Posterior cingulate gyrus (tissue), 11 donors: ENCODE measurements at regions of chr17 and their contacts with region 1.

Region 1: GRCh38 chr17:3738562-3739295 is 15.0 kb downstream of the HASPIN start:
- DNase-seq: peak in 9 of 10 donors; percentile 39 to 94 (median 54)

Region 2: GRCh38 chr17:3695723-3696411 is 42.9 kb before region 1 on chr17 and contains the start of gene P2RX5:
- intact Hi-C with region 1: no loop called
- DNase-seq: peak in 4 of 10 donors; percentile 19 to 83 (median 54)

Region 3: GRCh38 chr17:3802461-3803307 is 64.0 kb after region 1 on chr17:
- intact Hi-C with region 1: no loop called
- DNase-seq: no peak

Region 4: DNA sequence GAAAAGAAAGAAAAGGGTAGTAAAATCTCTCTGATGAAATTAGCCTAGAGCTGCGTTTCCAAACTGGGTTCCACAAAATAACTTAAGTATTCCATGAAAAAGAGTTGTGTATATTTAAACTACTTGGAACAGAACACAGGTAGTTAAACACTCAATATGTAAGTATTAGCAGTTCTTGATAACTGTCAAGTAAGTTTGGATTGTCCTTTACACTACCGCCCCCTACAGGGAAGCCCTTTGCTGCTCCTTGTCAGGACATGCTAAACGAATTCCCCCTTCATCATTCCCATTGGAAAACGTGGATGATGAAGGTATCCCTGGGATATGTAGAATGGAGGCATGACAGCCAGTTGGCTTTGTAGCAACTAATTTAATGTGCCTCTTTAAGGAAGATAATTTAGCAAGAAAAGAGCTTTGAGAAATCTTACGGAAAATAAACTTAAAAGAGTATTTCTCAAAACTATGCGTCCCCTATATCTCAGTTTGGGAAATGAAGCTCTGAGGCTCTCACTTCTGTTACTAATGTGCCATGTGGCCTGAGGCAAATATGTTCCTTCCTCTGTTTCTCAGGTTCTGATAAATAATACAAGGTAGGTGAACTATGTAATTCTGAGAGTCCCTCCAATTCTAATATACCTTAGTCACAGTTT is 88.5 kb after region 1 on chr17:
- intact Hi-C with region 1: loop called (anchors 1 kb)
- DNase-seq: peak in 6 of 10 donors; percentile 50 to 91 (median 68)

Region 5: GRCh38 chr17:3845621-3846441 is 107.1 kb after region 1 on chr17 and contains the start of gene NCBP3:
- intact Hi-C with region 1: loop called (anchors 5 kb)
- DNase-seq: peak; percentile 76 to 99 (median 88)

Region 6: GRCh38 chr17:4004517-4005295 is 266.0 kb after region 1 on chr17:
- intact Hi-C with region 1: loop called (anchors 5 kb)
- DNase-seq: peak in 7 of 10 donors; percentile 36 to 92 (median 46)

Region 7: GRCh38 chr17:4074831-4075495 is 336.2 kb after region 1 on chr17:
- intact Hi-C with region 1: loop called (anchors 10 kb)
- DNase-seq: no peak